Naive thymus-derived CD4-positive, alpha-beta T cell (primary cell): ENCODE measurements at regions of chr22 and their contacts with region 1.

Region 1: GRCh38 chr22:37244114-37244921 is at the start of gene RAC2:
- DNase-seq: peak; percentile 62 to 89 (median 76)
- ATAC-seq: peak; percentile 76
- H3K4me3 ChIP-seq: peak within 1 kb of the TSS; percentile 90
- H3K4me3 Mint-ChIP-seq: peak within 1 kb of the TSS; percentile 86 to 99 (median 98)
- H3K27ac ChIP-seq: peak within 1 kb of the TSS; percentile 86
- H3K27ac Mint-ChIP-seq: peak within 1 kb of the TSS; percentile 89 to 99 (median 97)
- H3K4me1 ChIP-seq: peaks cover 42 to 43% of the 10 kb centered on the region in 2 donors
- H3K4me1 Mint-ChIP-seq: peaks cover 33 to 54% (median 50%) of the 10 kb centered on the region in 7 donors
- H3K27me3 ChIP-seq: no peaks in the 10 kb centered on the region
- H3K27me3 Mint-ChIP-seq: no peaks in the 10 kb centered on the region
- total RNA-seq, gene RAC2: 263 to 886 (median 301) TPM

Region 2: GRCh38 chr22:37077884-37078485 is 166.3 kb before region 1 on chr22:
- CTCF ChIA-PET with region 1: no interaction called
- POLR2A ChIA-PET with region 1: interaction called, 3 read pairs
- intact Hi-C with region 1: loop called in 1 of 2 experiments (anchors 1 kb)
- DNase-seq: peak; percentile 69 to 92 (median 83)
- ATAC-seq: peak; percentile 56
- H3K4me3 ChIP-seq: no peak overlapping the region
- H3K4me3 Mint-ChIP-seq: peak overlapping the region; percentile 41 to 81 (median 65)
- H3K27ac ChIP-seq: peak overlapping the region; percentile 93
- H3K27ac Mint-ChIP-seq: peak overlapping the region; percentile 95 to 100 (median 99)
- H3K4me1 ChIP-seq: peaks cover 34 to 35% of the 10 kb centered on the region in 2 donors
- H3K4me1 Mint-ChIP-seq: peaks cover 23 to 54% (median 40%) of the 10 kb centered on the region in 7 donors
- H3K27me3 ChIP-seq: no peaks in the 10 kb centered on the region
- H3K27me3 Mint-ChIP-seq: peaks cover 0 to 5% (median 4%) of the 10 kb centered on the region in 5 donors

Region 3: DNA sequence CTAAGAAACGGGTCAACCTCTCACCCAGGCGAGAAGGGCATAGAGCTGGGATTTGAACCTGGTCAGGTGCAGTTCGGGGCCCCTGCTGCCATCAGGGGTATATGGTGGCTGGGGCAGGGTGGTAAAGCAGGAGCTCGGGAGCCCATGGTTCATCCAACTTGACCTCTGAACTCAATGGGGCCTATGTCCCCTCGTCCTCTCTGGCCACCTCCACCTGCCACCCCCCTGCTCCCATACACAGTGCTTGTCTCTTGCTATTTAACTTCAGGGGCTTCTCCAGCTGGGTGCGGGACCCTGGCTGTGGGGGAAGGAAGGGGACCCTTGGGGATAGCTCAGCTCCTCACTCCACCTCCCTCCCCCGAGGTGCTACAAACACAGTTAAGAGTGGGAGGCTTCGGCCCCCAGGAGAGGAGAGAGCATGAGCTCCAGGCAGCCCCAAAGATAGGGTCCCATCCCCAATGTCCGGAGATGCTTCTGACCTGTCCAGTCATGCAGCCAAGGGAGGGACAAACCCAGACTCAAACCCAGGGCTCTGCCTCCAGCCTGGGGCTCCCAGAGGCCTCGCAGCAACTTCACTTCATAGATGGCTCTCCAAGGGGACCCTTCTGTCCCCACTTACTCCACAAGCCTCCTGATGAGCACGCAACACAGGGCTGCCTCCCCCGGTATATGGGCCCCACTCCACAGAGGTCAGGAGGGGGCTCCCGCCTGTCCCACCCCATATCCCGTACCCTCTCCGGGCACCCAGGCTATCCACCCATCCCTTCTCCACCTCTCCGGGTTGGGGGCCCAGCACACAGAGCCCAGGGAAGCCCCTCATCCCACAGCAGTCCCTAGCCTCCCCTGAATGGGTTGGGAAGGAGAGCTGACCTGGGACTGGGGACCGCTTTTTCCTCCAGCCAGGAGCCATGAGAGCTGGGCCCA is 95.3 kb before region 1 on chr22:
- CTCF ChIA-PET with region 1: no interaction called
- POLR2A ChIA-PET with region 1: interaction called, 5 read pairs
- intact Hi-C with region 1: loop called in 1 of 2 experiments (anchors 5 kb)
- DNase-seq: peak in 1 of 9 donors; percentile 37
- ATAC-seq: no peak
- H3K4me3 ChIP-seq: peak overlapping the region; percentile 69
- H3K4me3 Mint-ChIP-seq: peak overlapping the region; percentile 70 to 91 (median 86)
- H3K27ac ChIP-seq: peak overlapping the region; percentile 84
- H3K27ac Mint-ChIP-seq: peak overlapping the region; percentile 92 to 99 (median 95)
- H3K4me1 ChIP-seq: peaks cover 40 to 46% of the 10 kb centered on the region in 2 donors
- H3K4me1 Mint-ChIP-seq: peaks cover 36 to 82% (median 64%) of the 10 kb centered on the region in 7 donors
- H3K27me3 ChIP-seq: no peaks in the 10 kb centered on the region
- H3K27me3 Mint-ChIP-seq: no peaks in the 10 kb centered on the region

Region 4: DNA sequence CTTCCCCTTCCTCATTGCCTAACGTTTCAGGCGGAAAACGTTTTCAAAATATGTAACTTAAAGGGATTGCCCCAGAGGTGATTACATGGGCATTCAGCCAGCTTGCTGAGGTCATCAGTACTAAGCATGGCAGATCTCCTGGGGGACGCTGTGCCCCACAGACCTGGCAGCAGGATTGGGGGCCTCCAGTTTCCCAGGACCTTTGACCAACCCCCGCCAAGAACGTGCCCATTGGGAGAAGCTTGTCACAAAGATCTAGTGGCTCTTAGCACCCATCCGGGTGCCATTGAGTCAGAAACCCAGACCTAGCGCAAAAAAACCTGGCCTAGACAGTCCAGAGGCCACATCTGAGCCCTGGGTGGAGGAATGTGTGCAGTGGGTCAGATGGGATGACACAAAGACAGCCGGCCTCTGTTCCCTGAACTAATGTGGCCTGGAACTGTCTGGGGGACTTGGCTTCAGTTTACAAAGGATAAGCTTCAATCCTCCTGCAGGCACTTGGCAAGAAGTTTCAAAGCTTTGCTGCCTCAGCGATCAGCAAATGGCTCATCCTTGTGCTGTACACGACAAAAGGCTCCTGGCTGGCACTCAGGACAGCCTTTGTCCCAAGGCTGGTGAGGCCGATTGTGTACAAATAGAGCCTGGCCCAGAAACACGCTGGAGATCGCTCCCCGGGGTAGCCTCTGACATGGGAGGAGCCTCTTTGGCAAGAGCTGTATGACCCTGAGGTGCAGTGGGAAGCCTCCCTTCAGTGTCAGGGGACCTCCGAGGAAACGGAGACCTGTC is 65.8 kb before region 1 on chr22:
- CTCF ChIA-PET with region 1: no interaction called
- POLR2A ChIA-PET with region 1: no interaction called
- intact Hi-C with region 1: no loop called
- DNase-seq: no peak
- ATAC-seq: no peak
- H3K4me3 ChIP-seq: no peak overlapping the region
- H3K4me3 Mint-ChIP-seq: no peak overlapping the region
- H3K27ac ChIP-seq: no peak overlapping the region
- H3K27ac Mint-ChIP-seq: peak overlapping the region in 1 of 9 donors; percentile 3
- H3K4me1 ChIP-seq: peaks cover 7 to 11% of the 10 kb centered on the region in 2 donors
- H3K4me1 Mint-ChIP-seq: peaks cover 13 to 28% (median 22%) of the 10 kb centered on the region in 7 donors
- H3K27me3 ChIP-seq: no peaks in the 10 kb centered on the region
- H3K27me3 Mint-ChIP-seq: peaks cover 0 to 6% (median 0%) of the 10 kb centered on the region in 5 donors

Region 5: GRCh38 chr22:37218771-37219411 is 25.4 kb before region 1 on chr22:
- CTCF ChIA-PET with region 1: interaction called, 37 read pairs
- POLR2A ChIA-PET with region 1: interaction called, 335 read pairs
- intact Hi-C with region 1: loop called (anchors 1 kb)
- DNase-seq: peak in 8 of 9 donors; percentile 59 to 97 (median 94)
- ATAC-seq: peak; percentile 89
- H3K4me3 ChIP-seq: peak overlapping the region; percentile 55
- H3K4me3 Mint-ChIP-seq: peak overlapping the region; percentile 74 to 92 (median 83)
- H3K27ac ChIP-seq: peak overlapping the region; percentile 77
- H3K27ac Mint-ChIP-seq: peak overlapping the region; percentile 79 to 99 (median 91)
- H3K4me1 ChIP-seq: peaks cover 61 to 76% of the 10 kb centered on the region in 2 donors
- H3K4me1 Mint-ChIP-seq: peaks cover 62 to 99% (median 92%) of the 10 kb centered on the region in 7 donors
- H3K27me3 ChIP-seq: no peaks in the 10 kb centered on the region
- H3K27me3 Mint-ChIP-seq: no peaks in the 10 kb centered on the region

Region 6: GRCh38 chr22:37260901-37261336 is 16.6 kb after region 1 on chr22:
- CTCF ChIA-PET with region 1: interaction called, 184 read pairs
- POLR2A ChIA-PET with region 1: interaction called, 151 read pairs
- intact Hi-C with region 1: loop called (anchors 1 kb)
- DNase-seq: peak; percentile 46 to 71 (median 64)
- ATAC-seq: peak; percentile 91
- H3K4me3 ChIP-seq: no peak overlapping the region
- H3K4me3 Mint-ChIP-seq: peak overlapping the region in 6 of 10 donors; percentile 1 to 33 (median 15)
- H3K27ac ChIP-seq: no peak overlapping the region
- H3K27ac Mint-ChIP-seq: peak overlapping the region in 8 of 9 donors; percentile 7 to 86 (median 56)
- H3K4me1 ChIP-seq: peaks cover 7 to 24% of the 10 kb centered on the region in 2 donors
- H3K4me1 Mint-ChIP-seq: peaks cover 23 to 32% (median 27%) of the 10 kb centered on the region in 7 donors
- H3K27me3 ChIP-seq: no peaks in the 10 kb centered on the region
- H3K27me3 Mint-ChIP-seq: peaks cover 0 to 13% (median 0%) of the 10 kb centered on the region in 5 donors

Region 7: GRCh38 chr22:37282385-37282677 is 38.0 kb after region 1 on chr22 and contains the start of gene CYTH4:
- CTCF ChIA-PET with region 1: no interaction called
- POLR2A ChIA-PET with region 1: interaction called, 12 read pairs
- intact Hi-C with region 1: loop called in 1 of 2 experiments (anchors 2 kb)
- DNase-seq: peak; percentile 48 to 76 (median 67)
- ATAC-seq: peak; percentile 78
- H3K4me3 ChIP-seq: peak within 1 kb of the TSS; percentile 89
- H3K4me3 Mint-ChIP-seq: peak within 1 kb of the TSS; percentile 90 to 98 (median 96)
- H3K27ac ChIP-seq: peak within 1 kb of the TSS; percentile 85
- H3K27ac Mint-ChIP-seq: peak within 1 kb of the TSS; percentile 90 to 99 (median 98)
- H3K4me1 ChIP-seq: peaks cover 16 to 27% of the 10 kb centered on the region in 2 donors
- H3K4me1 Mint-ChIP-seq: peaks cover 41 to 83% (median 62%) of the 10 kb centered on the region in 7 donors
- H3K27me3 ChIP-seq: no peaks in the 10 kb centered on the region
- H3K27me3 Mint-ChIP-seq: no peaks in the 10 kb centered on the region
- total RNA-seq, gene CYTH4: 123 to 227 (median 214) TPM

Region 8: DNA sequence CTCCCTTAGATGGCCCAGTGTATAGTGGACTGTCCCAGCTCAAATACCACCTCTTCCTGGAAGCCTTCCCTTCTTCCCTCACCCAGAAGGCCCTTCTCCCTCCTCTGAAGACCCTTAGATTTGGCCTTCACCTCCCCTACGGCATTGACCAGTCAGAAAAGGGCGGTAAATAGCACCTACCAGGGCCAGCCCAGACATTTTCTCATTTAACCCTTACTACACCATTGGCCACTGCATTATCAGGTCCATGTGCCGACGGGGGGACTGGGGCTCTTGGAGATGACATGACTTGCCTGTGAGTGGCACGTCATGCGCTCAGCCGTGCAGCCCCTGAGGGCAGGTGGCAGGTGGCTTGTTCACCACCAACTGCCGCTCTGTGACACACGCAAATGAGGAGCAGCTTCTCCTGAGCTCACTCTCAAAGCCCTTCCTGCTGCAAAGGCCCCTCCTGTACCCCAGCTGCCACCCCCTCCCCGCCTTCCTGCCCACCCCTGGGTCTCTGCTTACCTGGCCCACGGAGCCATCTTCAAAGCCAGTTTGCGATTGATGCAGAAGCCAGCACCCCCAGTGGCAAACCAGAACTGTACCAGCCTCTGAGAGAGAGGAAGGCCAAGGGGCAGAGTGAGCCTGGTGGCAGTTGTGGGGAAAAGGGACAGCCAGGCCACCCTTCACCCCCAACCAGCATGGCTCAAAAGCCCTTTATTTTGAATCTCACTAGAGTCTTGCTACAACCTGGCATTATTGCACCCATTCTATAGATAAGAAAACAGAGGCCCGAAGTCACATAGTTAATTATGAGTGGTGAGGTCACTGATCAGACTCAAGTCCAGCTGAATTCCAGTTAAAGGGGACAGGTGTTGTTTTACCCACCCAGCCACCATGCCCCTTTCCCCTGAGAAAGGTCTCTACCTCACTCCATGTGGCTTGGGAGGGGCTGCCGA is 232.3 kb after region 1 on chr22:
- CTCF ChIA-PET with region 1: no interaction called
- POLR2A ChIA-PET with region 1: no interaction called
- intact Hi-C with region 1: no loop called
- DNase-seq: no peak
- ATAC-seq: no peak
- H3K4me3 ChIP-seq: no peak overlapping the region
- H3K4me3 Mint-ChIP-seq: no peak overlapping the region
- H3K27ac ChIP-seq: peak overlapping the region; percentile 1
- H3K27ac Mint-ChIP-seq: peak overlapping the region in 6 of 9 donors; percentile 54 to 83 (median 63)
- H3K4me1 ChIP-seq: peaks cover 0 to 5% of the 10 kb centered on the region in 2 donors
- H3K4me1 Mint-ChIP-seq: peaks cover 12 to 25% (median 19%) of the 10 kb centered on the region in 7 donors
- H3K27me3 ChIP-seq: no peaks in the 10 kb centered on the region
- H3K27me3 Mint-ChIP-seq: no peaks in the 10 kb centered on the region

Region 9: DNA sequence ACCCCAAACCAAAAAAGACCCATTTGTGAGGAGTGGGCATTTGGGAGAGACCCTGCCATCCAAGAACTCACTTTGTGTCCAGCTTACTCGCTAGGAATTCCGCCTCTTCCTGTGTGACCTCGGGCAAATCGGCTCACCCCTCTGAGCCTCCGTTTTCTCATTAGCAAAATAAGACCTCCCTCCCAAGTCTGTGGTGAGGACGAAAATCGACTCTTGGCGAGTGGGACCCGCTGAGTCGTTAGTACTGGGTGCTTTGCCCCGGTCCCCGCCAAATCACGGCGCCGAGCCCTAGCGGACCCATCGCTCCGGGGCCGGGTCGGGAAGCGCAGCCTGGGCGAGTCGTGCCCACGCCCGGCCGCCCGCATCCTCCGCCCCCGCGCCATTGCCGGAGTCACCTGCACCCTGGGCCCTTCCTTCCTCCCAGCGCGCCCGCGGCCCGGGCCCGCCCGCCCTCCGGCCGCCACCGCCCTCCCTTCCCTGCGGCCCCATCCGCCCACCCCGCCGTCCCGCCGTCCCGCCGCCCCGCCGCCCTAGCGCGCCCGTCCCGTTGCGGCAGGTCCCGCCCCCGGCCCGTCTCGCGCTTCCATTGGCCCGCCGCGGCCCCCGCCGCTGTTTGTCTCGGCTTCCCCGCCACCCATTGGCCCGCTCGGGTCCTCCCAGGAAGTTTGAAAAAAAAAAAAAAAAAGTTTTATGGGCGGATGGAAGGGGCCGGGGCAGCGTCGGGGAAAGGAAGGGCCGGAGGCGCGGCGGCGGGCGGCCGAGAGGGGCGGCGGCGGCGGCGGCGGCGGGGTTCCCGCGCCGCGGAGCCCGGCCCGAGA is 501.4 kb after region 1 on chr22:
- CTCF ChIA-PET with region 1: no interaction called
- POLR2A ChIA-PET with region 1: no interaction called
- intact Hi-C with region 1: loop called in 1 of 2 experiments (anchors 5 kb)
- DNase-seq: peak; percentile 67 to 90 (median 78)
- ATAC-seq: peak; percentile 97
- H3K4me3 ChIP-seq: peak overlapping the region; percentile 74
- H3K4me3 Mint-ChIP-seq: peak overlapping the region; percentile 82 to 96 (median 92)
- H3K27ac ChIP-seq: peak overlapping the region; percentile 77
- H3K27ac Mint-ChIP-seq: peak overlapping the region; percentile 75 to 93 (median 87)
- H3K4me1 ChIP-seq: peaks cover 9 to 18% of the 10 kb centered on the region in 2 donors
- H3K4me1 Mint-ChIP-seq: peaks cover 13 to 36% (median 26%) of the 10 kb centered on the region in 7 donors
- H3K27me3 ChIP-seq: no peaks in the 10 kb centered on the region
- H3K27me3 Mint-ChIP-seq: no peaks in the 10 kb centered on the region